Ovary (tissue), 10 donors: ENCODE measurements at regions of chr20 and their contacts with region 1.

Region 1: DNA sequence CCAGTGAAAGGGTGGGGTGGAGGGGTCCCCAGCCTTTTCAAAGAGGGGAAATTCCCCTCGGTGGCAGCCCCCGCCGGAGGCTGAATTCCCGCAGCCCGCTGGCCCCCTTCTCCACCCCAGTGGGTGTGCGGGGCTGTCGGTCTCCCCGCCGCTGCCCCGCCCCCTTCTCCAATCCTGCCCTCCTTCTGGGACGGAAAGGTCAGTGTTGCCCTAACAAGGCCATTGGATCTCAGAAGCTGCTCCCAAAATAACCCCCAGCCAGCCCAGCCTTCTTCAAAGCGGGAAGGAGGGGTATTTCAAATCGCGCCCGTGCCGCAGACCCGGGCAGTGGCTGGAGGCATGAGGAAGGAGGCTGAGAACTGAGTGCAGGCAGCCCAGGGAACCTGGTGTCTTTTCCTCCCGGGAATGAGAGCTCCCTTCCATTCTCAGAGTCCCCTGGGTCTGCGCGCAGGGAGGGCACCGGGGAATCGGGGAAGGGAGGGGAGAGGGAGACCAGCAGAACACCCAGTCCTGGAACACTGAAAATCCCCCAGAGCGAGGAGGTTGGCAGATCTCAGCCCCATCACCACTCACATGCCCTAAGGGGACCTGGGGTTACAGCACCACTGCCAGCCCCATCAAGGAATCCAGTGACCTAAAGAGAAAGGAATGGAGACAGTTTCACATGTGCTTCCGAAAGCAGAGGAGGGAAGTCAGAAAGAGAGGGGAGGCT is at the start of gene JPH2:
- DNase-seq: peak; percentile 27 to 57 (median 46)
- H3K4me3 ChIP-seq: peak within 1 kb of the TSS; percentile 44
- H3K27ac ChIP-seq: peak within 1 kb of the TSS in 1 of 2 donors; percentile 14
- H3K4me1 ChIP-seq: peaks cover 2% of the 10 kb centered on the region
- H3K27me3 ChIP-seq: no peaks in the 10 kb centered on the region
- CTCF ChIP-seq: no peak
- EP300 ChIP-seq: no peak
- POLR2A ChIP-seq: no peak
- total RNA-seq, gene JPH2: 0.48 to 27.4 (median 3.0) TPM

Region 2: DNA sequence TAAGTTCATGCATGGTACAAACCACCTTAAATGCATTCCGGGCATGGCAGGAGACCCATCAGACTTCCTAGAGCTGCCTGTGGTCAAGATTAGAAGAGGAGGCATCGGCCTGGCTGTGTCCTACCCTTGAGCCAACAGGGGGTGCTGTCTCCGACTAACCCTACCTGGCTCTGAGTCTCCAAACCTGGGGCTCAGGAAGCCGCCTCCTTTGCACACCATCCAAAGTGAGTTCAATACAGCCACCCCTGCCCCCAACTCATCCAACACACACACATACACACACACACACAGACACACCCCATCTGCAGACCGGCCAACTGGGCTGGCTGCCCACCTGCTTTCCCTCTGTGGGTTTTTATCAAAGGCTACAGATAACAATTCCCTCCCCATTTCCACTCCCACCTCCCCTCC is 77.3 kb before region 1 on chr20:
- intact Hi-C with region 1: loop called in 3 of 4 experiments (anchors 5 to 10 kb)
- DNase-seq: peak in 1 of 5 donors; percentile 51
- H3K4me3 ChIP-seq: no peak overlapping the region
- H3K27ac ChIP-seq: no peak overlapping the region
- H3K4me1 ChIP-seq: no peaks in the 10 kb centered on the region
- H3K27me3 ChIP-seq: no peaks in the 10 kb centered on the region
- CTCF ChIP-seq: no peak
- EP300 ChIP-seq: no peak
- POLR2A ChIP-seq: no peak

Region 3: DNA sequence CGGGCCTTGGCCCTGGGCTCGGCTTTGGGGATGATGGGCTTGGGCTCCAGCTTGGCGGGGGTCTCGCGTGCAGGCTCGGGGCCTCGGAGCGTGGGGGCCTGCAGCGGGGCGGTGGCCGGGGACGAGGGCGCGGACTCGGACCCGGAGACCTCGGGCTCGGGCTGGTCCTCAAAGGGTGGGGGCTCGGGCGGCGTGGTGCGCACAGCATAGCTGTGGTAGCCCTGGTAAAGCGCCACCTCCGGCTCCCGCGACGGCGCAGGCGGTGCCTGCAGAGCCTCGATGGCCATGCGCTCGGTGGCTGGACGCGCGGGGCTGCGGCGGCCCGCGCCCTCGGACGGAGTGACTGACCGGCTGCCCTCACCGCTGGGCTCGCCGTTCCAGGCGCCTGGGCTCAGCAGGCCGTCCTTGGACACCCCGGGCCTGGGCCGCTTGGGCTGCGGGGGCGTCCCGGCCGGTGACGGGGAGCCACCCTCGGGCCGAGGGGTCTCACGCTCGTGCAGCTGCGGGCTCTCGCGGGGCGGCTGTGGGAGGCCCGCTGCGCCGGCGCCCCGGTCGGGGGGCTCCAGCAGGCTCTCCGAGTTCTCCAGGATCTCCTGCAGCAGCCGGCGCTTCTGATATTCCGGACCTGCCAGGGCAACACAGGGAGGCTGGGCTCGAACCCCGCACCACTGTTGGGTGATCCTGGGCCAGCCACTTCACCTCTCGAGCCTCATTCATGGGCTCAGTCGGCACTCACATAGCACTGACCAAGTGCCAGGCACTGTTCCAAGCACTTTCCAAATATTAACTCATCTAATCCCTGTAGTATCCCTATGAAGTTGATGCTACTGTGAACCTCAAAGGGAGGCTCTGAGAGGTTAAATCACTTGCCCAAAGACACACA is 71.2 kb before region 1 on chr20:
- intact Hi-C with region 1: loop called (anchors 2 to 10 kb)
- DNase-seq: no peak
- H3K4me3 ChIP-seq: no peak overlapping the region
- H3K27ac ChIP-seq: no peak overlapping the region
- H3K4me1 ChIP-seq: no peaks in the 10 kb centered on the region
- H3K27me3 ChIP-seq: no peaks in the 10 kb centered on the region
- CTCF ChIP-seq: no peak
- EP300 ChIP-seq: no peak
- POLR2A ChIP-seq: no peak

Region 4: GRCh38 chr20:44137210-44137801 is 49.9 kb before region 1 on chr20:
- intact Hi-C with region 1: loop called in 1 of 4 experiments (anchors 5 kb)
- DNase-seq: peak in 4 of 5 donors; percentile 25 to 65 (median 30)
- H3K4me3 ChIP-seq: peak overlapping the region; percentile 12
- H3K27ac ChIP-seq: no peak overlapping the region
- H3K4me1 ChIP-seq: no peaks in the 10 kb centered on the region
- H3K27me3 ChIP-seq: no peaks in the 10 kb centered on the region
- CTCF ChIP-seq: no peak
- EP300 ChIP-seq: no peak
- POLR2A ChIP-seq: no peak

Region 5: GRCh38 chr20:44153636-44154043 is 33.6 kb before region 1 on chr20:
- intact Hi-C with region 1: loop called in 1 of 4 experiments (anchors 5 kb)
- DNase-seq: no peak
- H3K4me3 ChIP-seq: no peak overlapping the region
- H3K27ac ChIP-seq: no peak overlapping the region
- H3K4me1 ChIP-seq: no peaks in the 10 kb centered on the region
- H3K27me3 ChIP-seq: no peaks in the 10 kb centered on the region
- CTCF ChIP-seq: no peak
- EP300 ChIP-seq: no peak
- POLR2A ChIP-seq: no peak